K562 (cell line): ENCODE measurements at regions of chr12 and their contacts with region 1.

Region 1: DNA sequence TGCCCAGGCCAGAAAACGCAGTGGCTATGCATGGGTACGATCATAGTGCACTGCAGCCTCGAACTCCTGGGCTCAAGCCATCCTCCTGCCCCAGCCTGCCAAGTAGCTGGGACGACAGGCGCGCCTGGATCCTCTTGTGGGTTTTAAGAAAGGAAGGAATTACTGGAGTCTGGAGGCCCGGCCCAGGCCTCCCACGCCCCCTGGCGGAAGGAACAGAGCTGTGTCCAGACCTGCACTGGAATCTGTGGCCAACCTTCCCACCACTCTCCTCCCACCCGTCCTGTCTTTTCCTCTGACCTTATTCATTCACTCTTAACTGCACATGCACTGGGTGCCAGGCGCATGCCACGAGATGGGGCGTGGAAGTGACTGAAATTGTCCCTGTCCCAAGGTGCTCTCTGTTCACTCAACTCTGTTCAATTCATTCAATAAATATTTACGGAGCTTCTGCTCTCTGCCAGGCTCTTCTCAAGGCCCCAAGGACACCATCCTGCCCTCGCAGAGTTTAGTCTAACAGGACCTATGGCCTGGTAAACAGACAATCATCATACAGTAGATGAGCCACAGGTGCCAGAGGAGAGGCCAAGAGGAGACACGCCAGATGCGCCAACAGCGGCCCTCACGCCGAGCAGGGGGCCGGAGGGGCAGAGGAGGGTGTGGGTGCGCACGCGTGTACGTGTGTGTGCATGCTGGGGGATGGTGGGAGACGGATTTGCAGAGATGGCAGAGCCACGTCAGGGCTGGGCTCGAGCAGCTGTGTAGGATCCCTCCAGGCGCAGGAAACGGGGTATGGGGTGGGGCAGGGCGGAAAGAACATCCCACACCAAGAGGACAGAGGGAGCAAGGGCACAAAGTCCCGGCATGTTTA is 13.7 kb upstream of the TMEM106C start:
- DNase-seq: peak; percentile 83 to 86 (median 84)
- ATAC-seq: peak; percentile 96
- H3K4me3 ChIP-seq: no peak overlapping the region
- H3K27ac ChIP-seq: no peak overlapping the region
- H3K4me1 ChIP-seq: peaks cover 0 to 11% of the 10 kb centered on the region in 2 experiments; a peak in 3 of 5 replicates
- H3K27me3 ChIP-seq: peaks cover 6 to 49% of the 10 kb centered on the region in 2 experiments; a peak in 3 of 5 replicates
- CTCF ChIP-seq: peak; percentile 88 to 92 (median 92)
- EP300 ChIP-seq: no peak
- POLR2A ChIP-seq: no peak
- RAD21 ChIP-seq: peak; percentile 78 to 87

Region 2: DNA sequence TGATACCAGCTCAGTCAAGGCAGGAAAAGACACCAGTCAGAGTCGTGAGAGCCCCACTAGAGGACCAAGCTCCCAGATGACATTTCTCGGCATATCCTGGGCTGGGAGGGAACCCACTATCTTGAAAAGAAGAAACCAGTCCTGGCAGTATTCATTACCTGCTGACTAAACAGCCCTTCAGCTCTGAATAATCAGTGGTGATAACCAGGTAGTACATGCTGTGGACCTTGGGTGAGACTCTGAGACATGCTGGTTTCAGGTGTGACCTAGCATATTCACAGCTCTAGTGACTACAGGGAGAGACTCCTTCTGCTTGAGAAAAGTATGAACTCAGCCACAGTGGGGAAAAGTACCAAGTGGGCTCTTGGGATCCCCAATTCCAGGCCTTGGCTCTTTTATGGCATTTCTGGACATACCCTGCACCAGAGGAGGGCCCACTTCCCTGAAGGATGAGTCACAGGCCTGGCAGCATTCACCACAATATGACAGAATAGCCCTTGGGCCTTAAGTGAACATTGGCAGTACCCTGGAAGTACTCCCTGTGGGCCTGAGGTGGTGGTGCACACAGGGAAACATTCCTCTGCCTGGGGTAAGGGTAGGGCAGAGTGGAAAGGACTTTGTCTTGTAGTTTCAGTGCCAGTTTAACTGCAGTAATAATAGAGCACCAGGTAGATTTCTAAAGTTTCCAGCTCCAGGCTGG is 1041.3 kb before region 1 on chr12:
- CTCF ChIA-PET with region 1: no interaction called
- POLR2A ChIA-PET with region 1: no interaction called
- in situ Hi-C with region 1: no loop called
- intact Hi-C with region 1: no loop called
- DNase-seq: no peak
- ATAC-seq: no peak
- H3K4me3 ChIP-seq: no peak overlapping the region
- H3K27ac ChIP-seq: no peak overlapping the region
- H3K4me1 ChIP-seq: no peaks in the 10 kb centered on the region
- H3K27me3 ChIP-seq: peaks cover 0 to 3% of the 10 kb centered on the region in 2 experiments; a peak in 1 of 5 replicates
- CTCF ChIP-seq: no peak
- EP300 ChIP-seq: no peak
- POLR2A ChIP-seq: no peak
- RAD21 ChIP-seq: no peak

Region 3: DNA sequence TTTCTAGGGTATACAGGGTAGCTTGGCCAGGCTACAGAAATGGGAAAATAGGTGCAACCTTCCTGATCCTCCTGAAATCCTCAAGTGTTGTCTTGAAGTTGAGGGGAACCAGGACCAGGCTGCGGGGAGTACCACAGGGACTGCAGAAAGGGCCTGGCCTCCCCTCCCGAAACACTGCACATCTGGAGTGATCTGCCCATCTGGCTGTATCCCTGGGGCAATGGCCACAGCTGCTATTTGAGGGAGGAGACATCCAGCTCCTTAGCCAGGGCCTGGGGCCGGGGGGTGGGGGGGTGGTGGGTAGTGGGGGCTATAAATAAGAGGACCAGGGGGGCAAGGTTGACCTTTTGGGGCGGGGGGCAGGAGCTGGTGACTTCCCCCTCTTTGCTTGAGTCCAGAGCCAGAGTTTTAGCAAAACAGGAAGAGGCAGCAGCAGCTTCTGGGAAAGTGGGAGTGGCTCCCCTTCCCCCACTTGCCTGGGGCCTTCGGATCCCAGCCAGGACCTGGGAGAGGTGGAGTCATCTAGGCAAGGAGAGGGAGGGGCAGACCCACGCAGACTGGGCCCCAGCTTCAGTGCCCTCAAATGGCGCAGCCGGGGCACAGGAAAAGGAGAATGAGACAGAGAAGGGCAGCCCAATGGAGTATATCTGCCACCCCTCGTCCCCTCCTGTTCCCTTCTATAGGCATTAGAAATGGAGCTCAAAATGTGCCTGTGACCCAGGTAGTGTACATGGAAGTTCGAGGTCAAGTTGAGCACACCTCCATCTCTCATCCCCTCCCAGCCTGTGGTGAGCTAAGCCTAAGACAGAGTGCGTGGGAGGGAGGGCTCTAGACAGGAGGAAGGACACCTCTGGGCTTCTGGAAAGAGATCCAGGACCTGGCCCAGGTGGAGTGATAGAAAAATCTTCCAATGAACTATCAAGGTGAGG is 120.8 kb before region 1 on chr12:
- CTCF ChIA-PET with region 1: no interaction called
- POLR2A ChIA-PET with region 1: no interaction called
- in situ Hi-C with region 1: no loop called
- intact Hi-C with region 1: no loop called
- DNase-seq: peak; percentile 87 to 92 (median 90)
- ATAC-seq: peak; percentile 81
- H3K4me3 ChIP-seq: peak overlapping the region; percentile 11
- H3K27ac ChIP-seq: peak overlapping the region; percentile 65
- H3K4me1 ChIP-seq: peaks cover 44 to 46% of the 10 kb centered on the region in 2 experiments
- H3K27me3 ChIP-seq: no peaks in the 10 kb centered on the region
- CTCF ChIP-seq: no peak
- EP300 ChIP-seq: peak; percentile 62
- POLR2A ChIP-seq: peak; percentile 68
- RAD21 ChIP-seq: no peak

Region 4: GRCh38 chr12:47870175-47870781 is 79.4 kb before region 1 on chr12:
- CTCF ChIA-PET with region 1: no interaction called
- POLR2A ChIA-PET with region 1: no interaction called
- in situ Hi-C with region 1: no loop called
- intact Hi-C with region 1: loop called (anchors 2 kb)
- DNase-seq: peak in 3 of 4 experiments; percentile 41 to 50 (median 45)
- ATAC-seq: peak; percentile 94
- H3K4me3 ChIP-seq: no peak overlapping the region
- H3K27ac ChIP-seq: no peak overlapping the region
- H3K4me1 ChIP-seq: peaks cover 4 to 21% of the 10 kb centered on the region in 2 experiments; a peak in 3 of 5 replicates
- H3K27me3 ChIP-seq: no peaks in the 10 kb centered on the region
- CTCF ChIP-seq: peak; percentile 57 to 66 (median 62)
- EP300 ChIP-seq: no peak
- POLR2A ChIP-seq: no peak
- RAD21 ChIP-seq: peak in 1 of 2 experiments; percentile 43; a peak in 2 of 4 replicates

Region 5: DNA sequence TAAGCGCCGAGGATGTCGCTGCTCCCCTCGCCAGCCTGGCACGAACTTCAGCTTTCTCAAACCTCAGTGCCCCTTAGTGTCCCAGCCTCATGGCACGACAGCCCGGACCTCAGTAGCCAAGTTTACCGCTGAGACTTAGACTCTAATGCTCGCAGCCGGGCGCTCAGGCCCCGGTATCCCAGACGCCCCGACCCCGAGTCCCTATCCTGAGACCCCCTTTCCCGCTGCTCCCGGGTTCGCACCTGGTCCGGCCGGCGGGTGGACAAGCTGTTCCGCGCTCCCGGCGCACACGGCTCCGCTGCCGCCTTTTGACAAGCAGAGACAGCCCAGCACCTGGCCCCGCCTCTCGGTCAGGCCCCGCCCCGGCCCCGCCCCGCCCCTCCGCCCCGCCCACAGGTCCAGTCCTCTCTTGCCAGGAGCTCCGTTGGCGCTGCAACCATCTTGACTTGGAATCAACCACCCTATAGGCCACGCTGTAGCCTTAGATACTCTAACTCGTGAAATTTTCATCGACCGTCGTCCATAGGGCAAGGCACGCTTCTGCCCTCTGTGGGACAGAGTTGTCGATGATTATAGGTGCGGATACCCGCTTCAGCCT is 44.9 kb before region 1 on chr12 and contains the start of gene VDR:
- CTCF ChIA-PET with region 1: interaction called, 4 read pairs
- POLR2A ChIA-PET with region 1: interaction called, 3 read pairs
- in situ Hi-C with region 1: no loop called
- intact Hi-C with region 1: loop called (anchors 5 kb)
- DNase-seq: peak; percentile 76 to 97 (median 94)
- ATAC-seq: peak; percentile 95
- H3K4me3 ChIP-seq: peak within 1 kb of the TSS; percentile 51
- H3K27ac ChIP-seq: no peak within 1 kb of the TSS; the same call in 2 of the 3 replicates
- H3K4me1 ChIP-seq: peaks cover 17 to 25% of the 10 kb centered on the region in 2 experiments
- H3K27me3 ChIP-seq: peaks cover 24 to 32% of the 10 kb centered on the region in 2 experiments
- CTCF ChIP-seq: no peak
- EP300 ChIP-seq: no peak
- POLR2A ChIP-seq: no peak
- RAD21 ChIP-seq: no peak
- polyA plus RNA-seq, gene VDR: 0.61 to 0.62 TPM

Region 6: GRCh38 chr12:48013287-48013686 is 63.6 kb after region 1 on chr12:
- CTCF ChIA-PET with region 1: no interaction called
- POLR2A ChIA-PET with region 1: no interaction called
- in situ Hi-C with region 1: no loop called
- intact Hi-C with region 1: no loop called
- DNase-seq: no peak
- ATAC-seq: no peak
- H3K4me3 ChIP-seq: no peak overlapping the region
- H3K27ac ChIP-seq: no peak overlapping the region
- H3K4me1 ChIP-seq: no peaks in the 10 kb centered on the region
- H3K27me3 ChIP-seq: peaks cover 66 to 67% of the 10 kb centered on the region in 2 experiments
- CTCF ChIP-seq: no peak
- EP300 ChIP-seq: no peak
- POLR2A ChIP-seq: no peak
- RAD21 ChIP-seq: no peak